ENCODE measurements at regions of chr13 and their contacts with region 1.

Region 1: DNA sequence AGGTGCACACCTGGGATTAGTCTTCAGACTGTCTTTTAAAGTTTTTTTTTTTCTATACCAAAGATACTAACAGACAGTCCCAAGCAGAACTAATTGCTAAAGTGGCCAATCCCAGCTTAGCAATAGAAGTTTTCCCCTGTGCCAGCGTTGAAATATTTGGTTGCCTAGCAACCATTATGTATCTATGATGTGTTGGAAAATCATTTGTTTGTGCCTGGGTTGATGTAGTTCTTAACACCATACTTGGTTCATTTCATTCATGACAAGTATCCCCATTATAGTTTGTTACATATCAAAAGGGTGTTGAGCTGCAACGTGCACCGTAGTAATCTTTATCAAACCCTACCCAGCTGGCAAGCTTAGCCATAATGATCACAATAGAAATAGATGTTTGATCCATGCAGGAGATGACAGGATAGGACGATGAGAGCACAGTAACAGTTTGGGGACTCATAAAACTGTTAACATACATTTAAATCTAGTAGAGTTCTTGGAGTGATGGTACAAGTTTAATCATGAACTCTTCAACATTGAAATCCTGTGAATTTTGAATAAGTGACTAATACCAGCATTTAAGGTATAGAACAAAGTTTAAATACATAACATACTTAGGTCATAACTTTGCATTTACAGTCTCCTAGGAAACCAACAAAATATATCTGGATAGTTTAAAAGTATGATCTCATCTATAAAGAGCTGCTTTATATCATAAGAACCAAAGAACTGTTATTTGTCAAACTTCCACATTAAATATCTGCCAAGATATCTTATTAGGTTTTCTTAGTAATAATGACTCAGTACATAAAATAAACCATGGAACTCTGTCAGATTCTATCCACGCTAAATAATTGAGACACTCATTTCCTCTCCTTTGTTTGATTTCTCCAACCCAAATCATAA is 73.4 kb downstream of the MBNL2 start:
- DNase-seq: no peak
- H3K4me3 Mint-ChIP-seq: no peak overlapping the region
- H3K27ac Mint-ChIP-seq: no peak overlapping the region
- H3K4me1 Mint-ChIP-seq: peaks cover 31% of the 10 kb centered on the region
- H3K27me3 Mint-ChIP-seq: no peaks in the 10 kb centered on the region

Region 2: DNA sequence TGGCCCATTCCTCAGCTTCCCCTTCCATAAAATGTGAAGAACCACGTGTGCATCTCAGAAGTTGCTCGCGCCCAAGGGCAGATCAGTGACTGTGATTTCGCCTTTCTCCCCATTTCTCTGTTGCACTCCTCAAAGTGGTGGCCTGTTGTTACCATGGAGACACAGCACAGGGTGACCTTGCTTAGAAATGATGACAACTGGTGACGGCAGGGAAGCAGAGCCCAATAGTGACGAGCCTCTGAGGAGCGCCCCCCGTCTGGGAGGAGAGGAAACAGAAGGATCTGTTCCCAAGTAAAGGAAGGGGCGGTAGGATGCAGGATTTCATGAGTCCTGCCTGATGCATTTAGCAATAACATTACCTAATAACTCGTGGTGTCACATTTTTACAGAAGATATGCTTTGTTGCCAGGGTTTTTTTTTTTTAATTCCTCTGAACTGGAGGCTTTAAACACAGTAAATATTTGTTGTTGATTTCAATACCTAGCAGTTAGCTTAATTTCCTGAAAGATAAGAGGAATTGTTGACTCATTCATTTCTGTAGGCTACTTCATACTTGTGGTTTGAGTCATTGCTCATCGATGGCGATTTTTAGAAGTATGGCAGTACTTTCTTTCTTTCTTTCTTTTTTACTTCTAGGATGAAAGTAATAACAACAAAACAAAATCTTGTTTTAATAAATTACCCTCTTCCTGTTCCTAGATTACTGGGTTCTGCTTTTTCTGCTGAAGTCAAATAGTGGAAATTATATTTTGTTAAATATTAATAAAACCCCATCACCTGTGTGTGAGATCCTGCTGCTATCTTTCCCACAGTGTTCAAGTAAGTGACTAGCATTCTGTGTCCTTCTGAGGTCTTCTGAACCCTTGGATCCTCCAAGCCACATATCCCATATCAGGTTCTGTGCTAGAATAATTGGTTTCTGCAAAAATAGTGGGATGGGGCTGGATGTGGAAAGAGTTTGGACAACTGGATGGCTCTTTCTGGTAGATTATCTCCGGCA is 37.4 kb before region 1 on chr13:
- CTCF ChIA-PET with region 1: no interaction called
- intact Hi-C with region 1: loop called (anchors 1 kb)
- DNase-seq: no peak
- H3K4me3 Mint-ChIP-seq: no peak overlapping the region
- H3K27ac Mint-ChIP-seq: no peak overlapping the region
- H3K4me1 Mint-ChIP-seq: peaks cover 74% of the 10 kb centered on the region
- H3K27me3 Mint-ChIP-seq: no peaks in the 10 kb centered on the region